WTC11 (cell line): ENCODE measurements at regions of chr17 and their contacts with region 1.

Region 1: DNA sequence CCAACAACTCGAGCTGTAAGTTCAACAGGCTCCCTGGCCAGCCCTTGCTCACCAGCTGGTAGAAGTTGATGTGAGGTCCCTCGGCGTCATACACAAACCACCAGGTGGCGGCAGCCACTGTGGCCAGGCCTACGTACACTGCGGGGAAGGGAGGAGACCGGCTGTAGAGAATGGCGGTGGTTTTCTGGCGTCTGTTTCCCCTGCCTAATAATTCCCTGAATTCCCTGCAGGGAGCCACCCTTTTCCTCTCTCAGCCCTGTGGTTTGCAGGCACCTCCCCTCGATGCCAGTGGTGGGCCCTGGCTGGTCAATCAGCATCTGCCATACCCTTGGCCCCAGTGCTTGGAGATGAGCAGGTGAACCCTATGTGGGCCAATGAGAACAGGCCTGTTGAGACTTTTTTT is 18.9 kb upstream of the P2RX1 start:
- DNase-seq: peak; percentile 83
- ATAC-seq: peak; percentile 97
- H3K4me3 Mint-ChIP-seq: no peak overlapping the region
- H3K27ac Mint-ChIP-seq: no peak overlapping the region; the same call in 1 of the 2 replicates
- H3K4me1 Mint-ChIP-seq: no peaks in the 10 kb centered on the region
- H3K27me3 Mint-ChIP-seq: no peaks in the 10 kb centered on the region
- CTCF ChIP-seq: peak; percentile 46; the same call in 1 of the 2 replicates

Region 2: GRCh38 chr17:3835410-3836229 is 99.5 kb before region 1 on chr17:
- CTCF ChIA-PET with region 1: no interaction called
- POLR2A ChIA-PET with region 1: no interaction called
- DNase-seq: no peak
- ATAC-seq: no peak
- H3K4me3 Mint-ChIP-seq: no peak overlapping the region
- H3K27ac Mint-ChIP-seq: peak overlapping the region; percentile 24
- H3K4me1 Mint-ChIP-seq: no peaks in the 10 kb centered on the region
- H3K27me3 Mint-ChIP-seq: no peaks in the 10 kb centered on the region
- CTCF ChIP-seq: no peak

Region 3: DNA sequence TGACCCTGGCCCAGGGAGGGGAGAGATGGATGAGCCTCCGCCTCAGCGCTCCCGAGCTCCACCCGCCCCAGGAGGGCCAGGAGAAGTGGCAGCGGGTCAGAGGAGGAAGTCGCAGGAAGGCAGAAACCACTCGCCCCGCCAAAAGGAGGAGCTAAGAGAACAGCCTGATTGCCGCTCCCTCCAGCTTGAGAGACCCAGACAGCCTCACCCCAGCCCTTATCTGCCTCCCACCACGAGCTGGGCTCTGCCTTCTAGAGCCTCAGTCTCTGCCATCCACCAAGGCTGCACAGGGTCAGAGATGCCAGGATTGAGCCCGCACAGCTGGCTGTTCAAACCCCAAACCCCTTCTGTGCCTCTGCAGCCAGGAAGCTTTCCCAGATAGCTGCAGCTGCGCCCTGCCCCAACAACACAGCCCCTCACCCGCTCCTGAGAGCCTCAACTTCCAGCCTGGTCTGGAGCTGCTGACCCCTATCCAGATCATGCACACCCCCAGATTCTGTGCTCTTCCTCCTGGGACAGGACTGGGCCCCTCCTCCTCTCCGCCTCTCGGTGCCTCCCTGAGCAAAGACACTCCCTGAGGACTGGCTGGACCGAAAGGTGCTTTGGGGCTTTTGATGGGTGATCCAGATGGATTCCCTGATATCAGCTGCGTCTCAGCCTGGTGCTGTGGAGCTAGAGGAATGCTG is 30.1 kb after region 1 on chr17:
- CTCF ChIA-PET with region 1: interaction called, 18 read pairs
- POLR2A ChIA-PET with region 1: interaction called, 3 read pairs
- DNase-seq: peak; percentile 78
- ATAC-seq: peak; percentile 85
- H3K4me3 Mint-ChIP-seq: peak overlapping the region; percentile 79
- H3K27ac Mint-ChIP-seq: peak overlapping the region; percentile 92; the same call in 1 of the 2 replicates
- H3K4me1 Mint-ChIP-seq: peaks cover 32% of the 10 kb centered on the region
- H3K27me3 Mint-ChIP-seq: peaks cover 12% of the 10 kb centered on the region
- CTCF ChIP-seq: no peak